ENCODE measurements at regions of chr1 and their contacts with region 1.

Region 1: GRCh38 chr1:81950591-81951244 is 150.0 kb downstream of the ADGRL2 start:
- DNase-seq: no peak
- ATAC-seq: no peak
- H3K4me3 ChIP-seq: peak overlapping the region in 2 of 12 donors; percentile 5 to 20
- H3K27ac ChIP-seq: no peak overlapping the region
- H3K4me1 ChIP-seq: peaks cover 0 to 25% (median 4%) of the 10 kb centered on the region in 12 donors
- H3K27me3 ChIP-seq: no peaks in the 10 kb centered on the region
- CTCF ChIP-seq: no peak
- POLR2A ChIP-seq: no peak

Region 2: GRCh38 chr1:81811757-81812371 is 138.9 kb before region 1 on chr1:
- intact Hi-C with region 1: loop called in 1 of 10 experiments (anchors 10 kb)
- DNase-seq: no peak
- ATAC-seq: no peak
- H3K4me3 ChIP-seq: no peak overlapping the region
- H3K27ac ChIP-seq: peak overlapping the region in 2 of 12 donors; percentile 5 to 10
- H3K4me1 ChIP-seq: peaks cover 4 to 86% (median 42%) of the 10 kb centered on the region in 12 donors
- H3K27me3 ChIP-seq: no peaks in the 10 kb centered on the region
- CTCF ChIP-seq: peak in 9 of 12 donors; percentile 19 to 51 (median 38)
- POLR2A ChIP-seq: no peak

Region 3: DNA sequence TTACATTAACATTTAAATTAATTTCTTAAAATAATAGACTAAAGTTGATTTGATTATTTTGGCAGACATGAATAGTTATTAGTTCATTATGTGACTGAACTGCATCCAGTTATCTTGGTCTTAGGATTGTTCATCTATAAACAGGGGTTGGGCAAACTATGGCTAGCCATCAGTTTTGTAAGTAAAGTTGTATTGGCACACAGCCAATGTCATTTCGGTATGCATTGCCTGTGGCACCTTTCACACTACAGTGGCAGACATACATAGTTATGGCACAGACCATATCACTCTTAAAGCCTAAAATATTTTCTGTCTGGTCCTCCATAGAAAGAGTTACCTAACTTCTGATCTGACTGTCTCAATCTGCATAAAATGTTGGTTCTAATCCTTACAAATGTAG is 122.8 kb before region 1 on chr1:
- intact Hi-C with region 1: loop called in 1 of 10 experiments (anchors 10 kb)
- DNase-seq: no peak
- ATAC-seq: no peak
- H3K4me3 ChIP-seq: no peak overlapping the region
- H3K27ac ChIP-seq: no peak overlapping the region
- H3K4me1 ChIP-seq: peaks cover 0 to 22% (median 9%) of the 10 kb centered on the region in 12 donors
- H3K27me3 ChIP-seq: no peaks in the 10 kb centered on the region
- CTCF ChIP-seq: no peak
- POLR2A ChIP-seq: no peak

Region 4: DNA sequence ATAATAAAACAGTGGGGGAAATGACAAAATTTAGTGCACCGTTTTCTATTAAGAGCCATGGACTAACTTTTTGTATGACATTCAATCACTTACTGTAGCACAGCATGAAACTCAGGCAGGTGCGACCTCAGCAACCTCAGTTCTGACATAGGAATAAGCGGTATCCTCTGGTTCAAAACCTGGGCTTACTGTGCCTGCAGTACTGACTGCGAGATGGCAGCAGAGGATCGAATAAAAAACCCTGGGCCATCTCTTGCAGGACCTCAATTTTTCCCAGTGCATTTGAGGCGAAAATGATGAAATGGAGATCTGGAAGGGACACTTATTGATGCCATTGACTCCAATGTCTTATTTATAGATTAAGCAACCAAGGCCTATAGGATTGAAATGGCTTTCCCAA is 64.7 kb after region 1 on chr1:
- intact Hi-C with region 1: no loop called
- DNase-seq: no peak
- ATAC-seq: no peak
- H3K4me3 ChIP-seq: no peak overlapping the region
- H3K27ac ChIP-seq: no peak overlapping the region
- H3K4me1 ChIP-seq: peaks cover 0 to 3% (median 0%) of the 10 kb centered on the region in 12 donors
- H3K27me3 ChIP-seq: no peaks in the 10 kb centered on the region
- CTCF ChIP-seq: no peak
- POLR2A ChIP-seq: no peak

Region 5: DNA sequence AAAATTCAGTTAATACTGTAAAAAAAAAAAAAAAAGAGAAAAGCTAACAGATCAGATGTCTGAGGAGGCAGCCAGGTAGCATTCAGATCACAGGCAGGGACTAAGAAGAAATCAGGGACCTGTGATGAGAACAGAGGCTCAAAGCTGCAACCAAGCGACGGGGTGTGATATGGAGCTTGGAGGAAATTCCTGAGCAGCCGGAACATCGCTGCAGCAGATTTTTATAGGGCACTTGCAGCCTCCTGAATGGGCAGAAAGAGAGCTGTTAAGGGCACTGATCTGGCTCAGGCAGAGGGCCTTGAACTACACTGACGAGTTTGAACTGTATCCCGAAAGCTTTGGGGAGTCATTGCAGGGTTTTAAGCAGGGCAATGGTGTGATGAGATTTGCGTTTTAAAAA is 165.4 kb after region 1 on chr1:
- intact Hi-C with region 1: no loop called
- DNase-seq: no peak
- ATAC-seq: no peak
- H3K4me3 ChIP-seq: no peak overlapping the region
- H3K27ac ChIP-seq: no peak overlapping the region
- H3K4me1 ChIP-seq: peaks cover 0 to 2% (median 0%) of the 10 kb centered on the region in 12 donors
- H3K27me3 ChIP-seq: no peaks in the 10 kb centered on the region
- CTCF ChIP-seq: no peak
- POLR2A ChIP-seq: no peak